WTC11 (cell line): ENCODE measurements at regions of chr6 and their contacts with region 1.

Region 1: GRCh38 chr6:34526992-34527728 is 29.0 kb downstream of the SPDEF start:
- DNase-seq: peak; percentile 96
- ATAC-seq: peak; percentile 72
- H3K4me3 Mint-ChIP-seq: peak overlapping the region; percentile 66
- H3K27ac Mint-ChIP-seq: no peak overlapping the region
- H3K4me1 Mint-ChIP-seq: peaks cover 25% of the 10 kb centered on the region
- H3K27me3 Mint-ChIP-seq: no peaks in the 10 kb centered on the region
- CTCF ChIP-seq: peak; percentile 52

Region 2: DNA sequence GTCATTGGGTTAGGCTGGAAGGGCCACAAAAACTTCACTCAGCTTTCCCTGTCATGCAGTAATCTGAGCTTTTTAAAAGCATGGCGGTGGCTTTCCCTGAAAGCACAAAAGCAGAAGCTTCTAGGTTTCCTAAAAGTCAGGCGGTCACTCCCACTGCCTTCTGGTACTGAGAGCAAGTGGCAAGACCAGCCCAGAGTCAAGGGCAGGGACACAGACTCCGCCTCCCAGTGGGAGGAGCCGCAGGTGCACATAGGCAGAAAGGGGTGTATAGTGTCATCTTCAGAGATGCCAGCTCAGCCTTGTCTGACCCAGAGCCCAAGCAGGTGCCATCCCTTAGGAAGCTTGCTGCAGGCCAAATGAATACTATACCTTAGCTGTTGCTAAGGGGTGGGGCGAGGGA is 79.2 kb before region 1 on chr6:
- CTCF ChIA-PET with region 1: no interaction called
- POLR2A ChIA-PET with region 1: no interaction called
- DNase-seq: peak; percentile 69
- ATAC-seq: peak; percentile 96
- H3K4me3 Mint-ChIP-seq: no peak overlapping the region
- H3K27ac Mint-ChIP-seq: peak overlapping the region; percentile 71; the same call in 1 of the 2 replicates
- H3K4me1 Mint-ChIP-seq: peaks cover 12% of the 10 kb centered on the region
- H3K27me3 Mint-ChIP-seq: no peaks in the 10 kb centered on the region
- CTCF ChIP-seq: no peak

Region 3: DNA sequence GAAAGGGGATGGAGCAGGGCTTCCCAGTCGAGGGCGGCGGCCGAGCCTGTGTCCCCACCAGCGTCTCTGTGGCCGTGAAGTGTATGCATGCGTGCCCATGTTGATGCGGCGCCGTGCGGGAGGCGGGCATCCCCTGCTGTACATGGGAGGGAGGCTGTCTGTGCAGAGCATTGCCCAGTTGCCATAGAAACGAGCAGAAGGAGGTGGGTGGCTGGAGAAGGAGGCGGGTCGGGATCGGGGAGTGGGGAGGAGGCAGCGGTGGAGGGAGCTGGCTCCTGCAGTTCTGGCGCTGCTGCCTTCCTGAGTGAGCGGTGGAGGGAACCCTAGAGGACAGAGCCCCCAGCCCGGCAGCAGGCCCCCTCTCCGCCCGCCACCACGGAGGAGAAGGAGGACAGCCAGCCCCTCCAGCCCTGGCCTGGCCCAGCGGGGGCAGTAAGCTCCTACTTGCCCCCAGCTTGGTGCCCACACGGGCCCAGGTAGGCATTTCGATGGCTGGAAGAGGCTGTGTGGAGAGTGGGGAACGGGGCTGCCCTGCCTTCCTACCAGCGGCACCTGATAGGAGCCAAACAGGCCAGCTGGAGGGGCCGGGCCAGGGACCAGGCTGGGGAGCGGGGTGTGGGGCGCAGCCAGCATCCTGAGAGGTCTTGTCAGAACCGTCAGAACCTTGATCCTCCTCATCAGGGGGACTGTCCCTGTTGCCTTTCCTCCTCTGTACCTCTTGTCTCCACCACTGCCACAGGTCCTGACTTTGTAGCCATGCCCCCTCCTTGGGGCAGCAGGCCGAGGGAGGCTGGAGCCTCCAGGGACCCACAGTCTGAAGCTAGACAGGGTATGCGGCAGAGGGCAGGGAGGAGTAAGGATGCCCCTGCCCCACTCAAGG is 12.3 kb before region 1 on chr6:
- CTCF ChIA-PET with region 1: interaction called, 11 read pairs
- POLR2A ChIA-PET with region 1: interaction called, 4 read pairs
- DNase-seq: peak; percentile 58
- ATAC-seq: peak; percentile 73
- H3K4me3 Mint-ChIP-seq: peak overlapping the region; percentile 94
- H3K27ac Mint-ChIP-seq: no peak overlapping the region
- H3K4me1 Mint-ChIP-seq: peaks cover 28% of the 10 kb centered on the region
- H3K27me3 Mint-ChIP-seq: peaks cover 3% of the 10 kb centered on the region
- CTCF ChIP-seq: no peak

Region 4: DNA sequence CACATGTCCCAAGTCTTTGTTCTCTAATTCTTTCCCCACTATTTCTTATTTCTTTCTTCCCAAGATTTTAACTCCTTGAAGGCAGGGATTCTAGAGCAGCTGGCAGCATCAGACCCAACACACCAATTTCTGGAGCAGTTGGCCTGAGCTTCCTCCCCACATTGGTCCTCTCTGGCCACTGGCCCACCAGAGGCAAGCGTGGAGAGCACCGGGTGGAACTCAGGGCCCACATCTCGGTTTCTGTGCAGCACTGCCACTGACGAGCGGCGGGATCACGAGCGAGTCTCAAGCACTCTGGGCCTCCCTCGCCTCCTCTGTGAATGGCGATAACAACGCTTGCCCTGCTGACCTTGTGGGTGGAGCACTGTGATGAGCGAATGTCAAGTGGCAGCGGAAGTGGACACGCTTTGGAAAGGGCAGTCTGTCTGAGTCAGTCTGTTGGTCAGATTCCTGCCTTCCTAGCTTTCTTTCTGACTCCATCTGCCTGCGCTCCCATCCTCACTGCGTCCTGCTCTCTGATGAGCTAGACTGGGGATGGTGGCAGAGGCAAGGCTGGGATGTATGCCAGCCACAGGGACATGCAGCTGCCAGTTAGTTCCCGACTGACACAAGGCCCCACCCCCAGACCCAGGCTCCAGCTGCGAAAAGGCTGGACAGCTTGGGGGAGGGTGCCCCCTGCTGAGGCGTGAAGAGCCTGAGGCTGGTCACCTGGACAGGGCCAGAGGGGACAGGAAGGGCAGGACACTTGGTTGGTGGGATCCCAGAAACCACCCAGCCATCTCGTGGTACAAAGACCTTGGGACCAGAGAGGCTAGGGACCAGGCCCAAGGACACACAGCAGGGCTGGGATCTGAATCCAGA is 33.4 kb after region 1 on chr6:
- CTCF ChIA-PET with region 1: interaction called, 11 read pairs
- POLR2A ChIA-PET with region 1: no interaction called
- DNase-seq: peak; percentile 39
- ATAC-seq: no peak
- H3K4me3 Mint-ChIP-seq: no peak overlapping the region
- H3K27ac Mint-ChIP-seq: peak overlapping the region; percentile 11; the same call in 1 of the 2 replicates
- H3K4me1 Mint-ChIP-seq: peaks cover 14% of the 10 kb centered on the region
- H3K27me3 Mint-ChIP-seq: no peaks in the 10 kb centered on the region; the same call in 1 of the 2 replicates
- CTCF ChIP-seq: no peak